ENCODE measurements at regions of chr3 and their contacts with region 1.

Region 1: DNA sequence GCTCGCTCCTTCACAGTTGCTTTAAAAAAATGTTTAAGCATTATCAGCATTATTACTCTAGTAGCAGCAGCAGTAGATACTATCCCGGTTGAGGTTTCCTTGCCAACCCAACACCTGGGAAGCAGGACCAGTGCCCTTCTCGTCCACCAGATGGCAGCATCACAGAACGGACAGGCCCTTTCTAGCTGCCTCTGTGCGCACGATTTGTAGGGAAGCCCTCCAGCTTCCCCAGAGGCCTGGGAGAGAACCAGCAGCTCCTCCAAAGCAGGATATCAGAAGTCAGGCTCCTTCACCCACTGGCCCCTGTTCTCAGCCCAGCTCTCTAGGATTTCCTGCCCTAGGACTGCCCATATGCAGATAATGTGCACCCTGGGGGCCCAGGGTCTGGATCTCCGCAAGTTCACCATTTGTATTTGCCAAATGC is 16.8 kb upstream of the ESYT3 start:
- DNase-seq: peak; percentile 80
- ATAC-seq: peak; percentile 87
- H3K4me3 Mint-ChIP-seq: no peak overlapping the region
- H3K27ac Mint-ChIP-seq: no peak overlapping the region
- H3K4me1 Mint-ChIP-seq: peaks cover 4% of the 10 kb centered on the region
- H3K27me3 Mint-ChIP-seq: peaks cover 9% of the 10 kb centered on the region

Region 2: GRCh38 chr3:138180375-138181029 is 237.1 kb before region 1 on chr3:
- CTCF ChIA-PET with region 1: interaction called, 3 read pairs
- POLR2A ChIA-PET with region 1: no interaction called
- intact Hi-C with region 1: loop called in 1 of 2 experiments (anchors 5 kb)
- DNase-seq: peak; percentile 61
- ATAC-seq: peak; percentile 95
- H3K4me3 Mint-ChIP-seq: no peak overlapping the region
- H3K27ac Mint-ChIP-seq: no peak overlapping the region
- H3K4me1 Mint-ChIP-seq: no peaks in the 10 kb centered on the region
- H3K27me3 Mint-ChIP-seq: peaks cover 3% of the 10 kb centered on the region

Region 3: GRCh38 chr3:138434276-138434874 is 16.8 kb after region 1 on chr3 and contains the start of gene ESYT3:
- CTCF ChIA-PET with region 1: interaction called, 19 read pairs
- POLR2A ChIA-PET with region 1: no interaction called
- intact Hi-C with region 1: no loop called
- DNase-seq: peak; percentile 83
- ATAC-seq: peak; percentile 97
- H3K4me3 Mint-ChIP-seq: peak within 1 kb of the TSS; percentile 63
- H3K27ac Mint-ChIP-seq: no peak within 1 kb of the TSS
- H3K4me1 Mint-ChIP-seq: peaks cover 5% of the 10 kb centered on the region
- H3K27me3 Mint-ChIP-seq: peaks cover 43% of the 10 kb centered on the region
- total RNA-seq, gene ESYT3: 0.21 to 0.37 TPM

Region 4: DNA sequence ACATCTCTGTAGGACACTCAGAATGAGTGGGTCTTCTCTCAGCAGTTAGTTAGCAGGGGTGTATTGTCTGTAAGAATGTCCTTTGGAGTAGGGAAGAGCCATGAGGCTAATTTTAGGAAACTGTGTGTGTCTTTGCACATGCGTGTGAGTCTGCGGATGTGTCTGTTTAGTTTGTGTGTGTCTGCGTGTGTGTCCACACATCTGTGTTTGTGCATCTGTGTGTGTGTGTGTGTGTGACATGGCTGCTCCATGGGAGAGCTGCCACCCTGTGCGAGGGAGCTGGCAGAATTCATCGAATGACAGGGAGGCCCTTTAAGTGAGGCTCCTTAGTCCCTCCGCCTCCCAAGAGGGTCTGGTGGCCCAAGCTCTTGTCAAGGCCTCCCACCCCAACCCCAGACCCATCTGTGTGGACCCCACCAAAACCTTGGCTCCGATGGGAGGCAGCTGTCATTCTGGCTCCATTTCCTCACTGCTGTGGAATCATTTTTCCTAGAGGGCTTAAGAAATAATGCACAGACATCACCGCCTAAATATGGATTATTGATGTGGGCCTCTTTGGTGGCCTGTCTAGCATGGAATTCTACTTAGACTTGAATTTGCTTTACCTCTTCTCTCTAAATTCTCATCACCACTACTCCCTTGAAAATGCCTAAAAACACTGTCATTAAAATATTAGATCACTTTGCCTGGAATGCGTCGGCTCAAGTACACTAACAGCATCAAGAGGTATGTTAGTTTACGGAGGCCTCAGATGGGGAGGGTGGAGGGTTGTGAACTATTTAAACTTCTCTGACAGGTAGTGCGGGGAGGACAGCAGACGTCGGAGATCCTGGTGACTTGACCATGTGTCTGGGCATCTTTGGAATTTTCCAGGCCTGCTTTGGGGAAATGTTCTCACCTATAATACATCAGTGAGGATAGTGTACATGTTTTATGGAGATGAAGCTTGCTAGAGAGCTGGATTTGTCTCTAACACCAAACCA is 26.2 kb after region 1 on chr3:
- CTCF ChIA-PET with region 1: interaction called, 11 read pairs
- POLR2A ChIA-PET with region 1: no interaction called
- intact Hi-C with region 1: no loop called
- DNase-seq: no peak
- ATAC-seq: no peak
- H3K4me3 Mint-ChIP-seq: no peak overlapping the region
- H3K27ac Mint-ChIP-seq: no peak overlapping the region
- H3K4me1 Mint-ChIP-seq: no peaks in the 10 kb centered on the region
- H3K27me3 Mint-ChIP-seq: no peaks in the 10 kb centered on the region

Region 5: DNA sequence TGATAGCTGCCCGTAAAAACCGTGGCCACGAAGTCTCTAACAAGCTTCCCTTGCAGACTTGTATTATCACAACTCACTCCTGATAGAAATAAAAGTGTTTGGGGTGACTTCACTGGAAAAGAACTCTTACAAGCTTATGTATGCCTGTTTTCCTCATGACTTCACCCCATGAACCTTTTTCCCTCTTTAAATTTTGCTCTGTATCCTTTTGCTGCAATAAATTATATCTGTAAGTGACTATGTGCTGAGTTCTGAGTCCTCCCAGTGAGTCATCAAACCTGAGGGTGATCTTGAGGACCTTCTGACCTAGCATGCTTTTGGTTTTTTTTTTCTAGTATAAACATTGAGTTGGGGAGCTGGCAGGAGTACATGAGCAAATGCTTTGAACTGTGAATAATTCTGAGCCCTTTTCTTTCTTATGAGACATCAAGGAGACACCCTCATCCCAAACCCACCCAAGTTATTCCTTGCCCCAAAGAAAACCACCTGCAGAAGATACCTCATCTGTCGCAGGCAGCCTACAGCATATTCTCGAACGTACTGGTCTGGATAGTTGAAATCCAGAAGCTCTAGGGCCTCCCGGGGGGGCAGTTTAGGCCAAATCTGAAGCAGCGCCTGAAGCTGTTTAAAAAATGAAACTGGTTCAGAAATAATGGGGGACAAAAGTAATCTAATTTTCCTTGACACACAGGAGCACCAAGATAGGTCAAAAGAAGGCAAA is 276.9 kb after region 1 on chr3:
- CTCF ChIA-PET with region 1: no interaction called
- POLR2A ChIA-PET with region 1: no interaction called
- intact Hi-C with region 1: loop called in 1 of 2 experiments (anchors 10 kb)
- DNase-seq: no peak
- ATAC-seq: no peak
- H3K4me3 Mint-ChIP-seq: no peak overlapping the region
- H3K27ac Mint-ChIP-seq: no peak overlapping the region
- H3K4me1 Mint-ChIP-seq: no peaks in the 10 kb centered on the region
- H3K27me3 Mint-ChIP-seq: no peaks in the 10 kb centered on the region

Region 6: DNA sequence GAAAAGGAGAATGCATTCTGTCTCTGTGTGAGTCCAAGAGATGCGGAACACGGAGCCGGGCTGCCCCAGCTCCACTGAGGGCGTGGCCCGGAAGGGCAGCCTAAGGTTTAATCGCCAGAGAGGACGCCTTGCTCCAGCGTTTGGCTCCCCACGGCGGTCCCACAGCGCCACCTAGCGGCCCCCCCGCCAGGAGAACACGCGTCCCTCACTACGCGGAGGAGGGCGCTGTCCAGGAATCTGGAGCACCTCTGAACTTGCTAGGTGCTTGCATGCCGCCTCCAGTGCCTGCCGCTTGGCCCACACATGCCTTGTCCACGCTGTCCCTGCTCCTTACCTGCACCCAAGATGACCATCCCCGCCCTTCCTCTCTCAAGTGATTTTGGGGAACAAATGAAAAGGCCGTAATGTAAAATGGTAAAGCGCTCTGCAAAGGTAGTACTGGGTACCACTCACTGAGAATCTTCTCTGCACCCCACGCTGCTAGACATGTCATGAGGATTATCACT is 911.8 kb after region 1 on chr3:
- CTCF ChIA-PET with region 1: no interaction called
- POLR2A ChIA-PET with region 1: no interaction called
- intact Hi-C with region 1: loop called in 1 of 2 experiments (anchors 2 kb)
- DNase-seq: peak; percentile 95
- ATAC-seq: peak; percentile 98
- H3K4me3 Mint-ChIP-seq: peak overlapping the region; percentile 25
- H3K27ac Mint-ChIP-seq: no peak overlapping the region
- H3K4me1 Mint-ChIP-seq: peaks cover 7% of the 10 kb centered on the region
- H3K27me3 Mint-ChIP-seq: peaks cover 19% of the 10 kb centered on the region

Measured in activated CD4-positive, alpha-beta T cell treated with anti-CD3 and anti-CD28 coated beads for 36 hours (primary cell).